Heart right ventricle (tissue), 16 donors: ENCODE measurements at regions of chr5 and their contacts with region 1.

Region 1: DNA sequence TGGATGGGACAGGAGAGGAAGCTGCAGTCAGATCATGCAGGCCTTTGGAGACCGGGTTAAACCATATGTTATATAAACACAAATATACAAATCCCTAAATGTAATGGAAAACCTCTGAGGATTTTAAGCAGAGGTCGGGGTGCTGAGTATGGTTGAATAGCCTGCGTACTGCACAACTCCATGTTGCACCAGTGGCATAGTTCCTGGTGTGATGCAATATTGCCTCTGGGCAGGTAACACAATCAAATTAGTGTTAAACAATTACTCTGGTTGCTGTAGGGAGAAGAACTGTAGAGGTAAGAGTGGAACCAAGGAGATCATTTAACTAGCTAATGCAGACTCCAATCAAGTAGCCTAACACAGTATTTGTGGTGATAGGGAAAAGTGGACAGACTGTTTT is 21.3 kb upstream of the RNF145 start:
- DNase-seq: no peak
- ATAC-seq: no peak
- H3K4me3 ChIP-seq: no peak overlapping the region
- H3K27ac ChIP-seq: no peak overlapping the region
- H3K4me1 ChIP-seq: no peaks in the 10 kb centered on the region
- H3K27me3 ChIP-seq: no peaks in the 10 kb centered on the region
- CTCF ChIP-seq: no peak

Region 2: DNA sequence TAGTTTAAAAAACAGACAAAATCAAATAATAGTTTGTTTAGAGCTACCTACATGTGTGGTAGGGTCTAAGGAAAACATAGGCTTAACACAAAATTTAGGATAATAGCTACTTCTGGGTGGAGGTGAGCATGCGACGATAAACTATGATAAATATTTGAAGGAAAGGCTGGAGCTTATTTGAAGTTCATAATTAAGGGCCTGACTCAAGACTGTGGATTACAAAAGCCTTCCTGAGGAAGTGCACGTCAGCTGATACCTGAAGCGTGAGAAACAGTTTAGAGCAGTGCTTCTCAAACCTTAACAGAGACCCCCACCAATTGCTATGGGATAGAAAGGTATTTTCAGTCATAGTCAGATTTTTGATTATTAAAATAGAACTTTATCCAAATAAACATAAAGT is 12.0 kb after region 1 on chr5:
- intact Hi-C with region 1: loop called in 1 of 10 experiments (anchors 1 kb)
- DNase-seq: no peak
- ATAC-seq: no peak
- H3K4me3 ChIP-seq: no peak overlapping the region
- H3K27ac ChIP-seq: no peak overlapping the region
- H3K4me1 ChIP-seq: no peaks in the 10 kb centered on the region
- H3K27me3 ChIP-seq: peaks cover 0 to 21% (median 0%) of the 10 kb centered on the region in 7 donors
- CTCF ChIP-seq: no peak

Region 3: GRCh38 chr5:159833088-159833487 is 602.4 kb after region 1 on chr5:
- intact Hi-C with region 1: no loop called
- DNase-seq: no peak
- ATAC-seq: peak in 1 of 8 donors; percentile 65
- H3K4me3 ChIP-seq: no peak overlapping the region
- H3K27ac ChIP-seq: no peak overlapping the region
- H3K4me1 ChIP-seq: no peaks in the 10 kb centered on the region
- H3K27me3 ChIP-seq: peaks cover 0 to 11% (median 0%) of the 10 kb centered on the region in 7 donors
- CTCF ChIP-seq: no peak